BJ (cell line): ENCODE measurements at regions of chr19 and their contacts with region 1.

Region 1: GRCh38 chr19:12722566-12723380 is 959 bp downstream of the TNPO2 start:
- DNase-seq: peak; percentile 81
- H3K4me3 ChIP-seq: peak overlapping the region; percentile 67
- H3K27me3 ChIP-seq: no peaks in the 10 kb centered on the region
- CTCF ChIP-seq: no peak

Region 2: DNA sequence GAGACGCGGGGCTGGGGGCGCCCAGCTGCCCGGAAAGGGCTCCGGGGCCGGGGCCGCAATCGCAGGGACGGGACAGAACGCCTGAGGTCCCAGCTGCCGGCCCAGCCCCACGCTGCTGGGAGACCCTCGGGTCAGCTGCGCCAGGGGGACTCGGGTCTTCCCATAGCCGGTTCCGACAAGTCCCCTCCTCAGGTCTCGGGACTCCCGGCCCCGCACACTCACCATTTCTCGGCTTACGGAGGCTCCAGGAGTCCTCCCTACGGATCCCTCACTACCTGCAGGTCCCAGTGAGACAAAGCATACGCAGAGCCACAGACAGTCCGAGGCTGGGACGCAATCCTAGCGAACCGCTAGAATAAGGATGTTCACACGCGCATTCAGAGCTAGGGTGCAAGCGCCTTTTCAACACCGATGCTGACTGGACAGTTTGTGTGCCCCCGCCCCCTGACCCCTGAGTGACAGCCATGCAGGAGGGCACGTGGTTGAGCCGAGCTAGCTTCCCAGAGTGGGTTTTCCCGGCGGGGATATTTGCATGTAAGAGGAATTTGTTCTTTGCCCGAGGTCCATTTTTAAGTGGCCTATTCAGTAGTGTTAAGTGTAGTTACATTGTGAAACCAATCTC is 125.7 kb before region 1 on chr19:
- CTCF ChIA-PET with region 1: no interaction called
- POLR2A ChIA-PET with region 1: no interaction called
- DNase-seq: no peak
- H3K4me3 ChIP-seq: no peak overlapping the region
- H3K27me3 ChIP-seq: no peaks in the 10 kb centered on the region
- CTCF ChIP-seq: no peak

Region 3: GRCh38 chr19:12736995-12737834 is 14.4 kb after region 1 on chr19 and contains the start of gene GET3:
- CTCF ChIA-PET with region 1: interaction called, 16 read pairs
- POLR2A ChIA-PET with region 1: interaction called, 3 read pairs
- DNase-seq: peak; percentile 100
- H3K4me3 ChIP-seq: peak within 1 kb of the TSS; percentile 87
- H3K27me3 ChIP-seq: no peaks in the 10 kb centered on the region
- CTCF ChIP-seq: no peak
- polyA plus RNA-seq, gene GET3: 163 and 250 TPM in 2 replicates

Region 4: DNA sequence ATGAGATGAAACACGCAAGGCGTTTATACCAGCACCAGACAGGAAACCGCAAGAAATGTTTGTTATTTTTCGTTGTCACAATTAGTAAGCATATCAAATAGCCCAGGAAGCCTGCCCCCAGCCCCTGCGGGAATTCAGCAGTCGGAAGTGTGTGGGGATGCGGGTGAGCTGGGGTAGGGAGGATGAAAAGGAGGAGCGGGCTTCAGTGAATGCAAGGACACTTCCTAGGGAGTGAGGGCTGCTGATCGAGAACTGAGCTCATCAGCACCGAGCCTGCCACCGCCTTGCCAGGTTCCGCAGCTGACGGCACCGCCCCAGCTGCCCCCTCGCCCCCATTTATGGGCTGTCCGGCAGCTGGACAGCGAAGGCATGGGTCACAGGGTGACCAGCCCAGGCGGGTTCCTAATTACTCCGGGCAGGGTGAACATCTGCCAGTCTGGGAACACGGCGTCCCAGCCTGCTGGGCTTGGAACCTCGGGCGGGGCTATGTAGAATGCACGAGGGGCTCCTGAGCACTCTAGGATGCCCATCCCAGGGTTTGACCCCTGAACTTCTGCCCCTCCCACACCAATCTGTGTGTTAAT is 27.3 kb after region 1 on chr19:
- CTCF ChIA-PET with region 1: no interaction called
- POLR2A ChIA-PET with region 1: no interaction called
- DNase-seq: no peak
- H3K4me3 ChIP-seq: no peak overlapping the region
- H3K27me3 ChIP-seq: peaks cover 7% of the 10 kb centered on the region
- CTCF ChIP-seq: no peak

Region 5: GRCh38 chr19:12796146-12797071 is 73.6 kb after region 1 on chr19:
- CTCF ChIA-PET with region 1: interaction called, 21 read pairs
- POLR2A ChIA-PET with region 1: no interaction called
- DNase-seq: no peak
- H3K4me3 ChIP-seq: no peak overlapping the region
- H3K27me3 ChIP-seq: no peaks in the 10 kb centered on the region
- CTCF ChIP-seq: peak; percentile 90

Region 6: GRCh38 chr19:12815088-12815487 is 92.3 kb after region 1 on chr19:
- CTCF ChIA-PET with region 1: no interaction called
- POLR2A ChIA-PET with region 1: no interaction called
- DNase-seq: no peak
- H3K4me3 ChIP-seq: no peak overlapping the region
- H3K27me3 ChIP-seq: no peaks in the 10 kb centered on the region
- CTCF ChIP-seq: no peak

Region 7: DNA sequence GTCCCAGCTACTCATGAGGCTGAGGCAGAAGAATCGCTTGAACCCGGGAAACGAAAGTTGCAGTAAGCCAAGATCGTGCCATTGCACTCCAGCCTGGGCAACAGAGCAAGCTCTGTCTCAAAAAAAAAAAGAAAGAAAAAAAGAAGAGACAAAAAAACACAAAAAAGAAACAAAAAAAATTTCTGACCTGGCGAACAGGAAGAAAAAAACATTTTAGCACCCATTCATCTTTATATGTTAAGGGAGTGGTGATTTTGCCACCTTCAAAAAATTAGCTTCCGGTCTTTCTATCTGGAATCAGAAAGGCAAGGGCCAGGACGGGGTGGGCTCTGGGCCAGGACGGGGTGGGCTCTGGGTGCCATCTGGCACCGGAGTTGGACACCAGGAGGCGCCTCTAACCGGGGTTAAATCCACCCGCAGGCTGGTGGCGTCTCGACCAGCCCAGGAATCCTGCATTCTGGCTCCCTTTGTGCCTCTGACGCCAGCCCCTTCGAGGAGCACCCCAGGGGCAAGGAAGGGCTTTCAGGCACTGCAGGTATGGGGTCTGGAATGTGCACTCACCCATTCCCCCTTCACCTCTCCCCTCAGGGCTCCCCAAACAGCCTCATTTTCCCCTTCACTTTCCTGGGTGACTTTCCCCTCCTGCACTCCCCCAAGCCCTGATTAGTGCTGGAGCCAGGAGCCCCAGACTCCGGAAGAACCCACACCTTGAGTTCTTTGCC is 1062.1 kb after region 1 on chr19:
- CTCF ChIA-PET with region 1: no interaction called
- POLR2A ChIA-PET with region 1: interaction called, 15 read pairs
- DNase-seq: no peak
- H3K4me3 ChIP-seq: no peak overlapping the region
- H3K27me3 ChIP-seq: no peaks in the 10 kb centered on the region
- CTCF ChIP-seq: peak; percentile 83